Adrenal gland (tissue), 19 donors: ENCODE measurements at regions of chr2 and their contacts with region 1.

Region 1: GRCh38 chr2:162007447-162008040 is 66.5 kb downstream of the DPP4 start:
- DNase-seq: no peak
- H3K4me3 ChIP-seq: no peak overlapping the region
- H3K27ac ChIP-seq: no peak overlapping the region
- H3K4me1 ChIP-seq: no peaks in the 10 kb centered on the region
- H3K27me3 ChIP-seq: no peaks in the 10 kb centered on the region
- CTCF ChIP-seq: peak; percentile 36 to 85 (median 74)
- POLR2A ChIP-seq: no peak

Region 2: DNA sequence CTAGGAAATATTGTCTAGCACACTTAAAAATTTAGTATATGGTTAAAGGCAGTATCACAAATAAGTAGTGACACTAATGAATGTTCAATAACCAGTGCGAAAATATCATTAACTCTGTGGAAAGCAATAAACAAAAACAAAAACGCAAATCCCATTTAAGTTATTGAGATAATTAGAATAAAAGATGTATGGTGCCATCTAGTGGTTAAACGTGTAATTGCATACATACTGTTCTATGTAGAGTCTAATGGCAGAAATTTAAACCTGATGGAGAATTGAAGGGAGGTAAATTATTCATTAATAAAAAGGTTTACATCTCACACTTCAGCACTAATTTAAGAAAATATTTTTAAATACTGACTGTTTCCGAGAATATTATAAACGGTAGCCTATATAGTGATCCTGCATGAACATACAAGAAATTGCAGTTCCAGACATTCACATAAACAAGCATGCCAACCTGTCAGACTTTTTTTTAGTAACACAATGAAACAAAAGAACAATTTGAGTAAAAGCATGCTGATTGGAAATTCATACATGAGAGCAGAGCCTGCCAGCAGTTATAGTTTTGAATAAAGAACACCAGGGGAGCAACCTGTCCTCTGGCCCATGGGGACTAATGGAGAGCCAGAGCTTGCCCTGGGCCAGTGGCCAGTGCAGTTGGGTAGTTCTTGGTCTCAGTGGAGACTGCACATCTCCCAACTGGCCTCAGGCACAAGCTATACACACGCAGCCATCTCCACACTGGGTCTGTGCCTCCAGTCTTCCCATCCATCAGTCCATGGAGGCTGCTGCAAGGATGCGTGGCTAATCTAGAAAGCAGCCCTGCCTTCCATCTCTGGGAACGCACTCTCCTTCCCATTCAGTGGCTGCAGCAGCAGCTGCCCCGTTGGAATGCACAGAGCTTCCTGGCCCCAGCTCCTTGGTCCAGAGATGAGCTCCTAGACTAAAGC is 116.5 kb after region 1 on chr2:
- intact Hi-C with region 1: loop called (anchors 2 kb)
- DNase-seq: no peak
- H3K4me3 ChIP-seq: no peak overlapping the region
- H3K27ac ChIP-seq: no peak overlapping the region
- H3K4me1 ChIP-seq: no peaks in the 10 kb centered on the region
- H3K27me3 ChIP-seq: no peaks in the 10 kb centered on the region
- CTCF ChIP-seq: peak; percentile 67 to 88 (median 78)
- POLR2A ChIP-seq: no peak